Endothelial cell of umbilical vein (primary cell): ENCODE measurements at regions of chr11 and their contacts with region 1.

Region 1: DNA sequence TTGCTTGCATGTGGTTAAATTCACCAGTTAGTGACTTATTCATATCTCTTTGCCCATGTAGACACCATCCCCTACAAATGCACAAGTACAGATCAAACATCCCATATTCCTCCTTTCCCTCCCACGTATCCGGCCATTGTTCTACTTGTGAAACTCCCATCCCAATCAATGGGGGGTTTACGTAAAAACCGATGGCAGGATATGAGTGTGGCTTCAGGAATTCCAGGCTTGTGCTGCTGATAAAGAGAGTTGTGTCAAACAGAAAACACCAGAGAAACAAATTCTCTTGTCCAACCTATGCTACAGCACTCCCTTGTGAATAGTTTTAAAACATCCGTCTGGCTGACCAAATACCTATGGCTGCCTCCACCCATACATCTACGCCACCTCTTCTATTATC is 15.5 kb downstream of the FLI1 start:
- DNase-seq: peak; percentile 99
- H3K4me3 ChIP-seq: no peak overlapping the region
- H3K27ac ChIP-seq: peak overlapping the region; percentile 97
- H3K4me1 ChIP-seq: peaks cover 88% of the 10 kb centered on the region
- H3K27me3 ChIP-seq: no peaks in the 10 kb centered on the region
- CTCF ChIP-seq: peak in 1 of 2 donors; percentile 5
- POLR2A ChIP-seq: peak; percentile 85

Region 2: DNA sequence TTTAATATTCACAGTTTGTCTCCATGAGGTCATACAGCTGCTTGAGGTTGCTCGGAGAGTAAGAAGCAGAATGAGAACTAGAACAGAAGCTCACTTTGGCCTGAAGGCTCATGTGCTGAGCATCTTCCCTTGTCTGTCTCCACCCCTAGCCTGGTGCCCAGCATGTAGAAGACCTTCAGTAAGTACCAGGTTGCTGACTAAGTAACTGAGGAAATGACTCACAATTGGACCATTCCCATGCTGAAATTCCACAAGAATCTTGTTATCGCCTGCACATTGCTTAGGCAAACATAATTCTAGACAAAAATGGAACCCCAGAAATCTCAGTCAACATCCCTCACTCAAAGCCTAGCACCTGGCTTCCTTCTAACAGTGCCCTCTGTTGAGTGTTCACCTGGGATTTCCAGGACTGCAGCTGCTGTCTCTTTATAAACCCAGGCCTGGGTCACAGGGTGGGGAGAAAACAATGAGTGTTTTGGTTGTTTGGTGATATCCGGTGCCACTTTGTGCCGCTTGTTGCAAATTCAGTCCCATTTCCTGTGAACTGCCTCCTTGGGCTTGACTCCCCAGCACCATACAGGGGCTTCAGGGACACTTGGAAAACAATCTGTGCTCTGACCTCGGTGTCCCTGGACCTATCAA is 528.8 kb before region 1 on chr11:
- CTCF ChIA-PET with region 1: no interaction called
- POLR2A ChIA-PET with region 1: no interaction called
- dilution Hi-C with region 1: no loop called
- intact Hi-C with region 1: loop called (anchors 5 kb)
- DNase-seq: peak; percentile 93
- H3K4me3 ChIP-seq: no peak overlapping the region
- H3K27ac ChIP-seq: peak overlapping the region; percentile 97
- H3K4me1 ChIP-seq: peaks cover 19% of the 10 kb centered on the region
- H3K27me3 ChIP-seq: no peaks in the 10 kb centered on the region
- CTCF ChIP-seq: no peak
- POLR2A ChIP-seq: no peak

Region 3: GRCh38 chr11:128238521-128239265 is 470.7 kb before region 1 on chr11:
- CTCF ChIA-PET with region 1: no interaction called
- POLR2A ChIA-PET with region 1: no interaction called
- dilution Hi-C with region 1: no loop called
- intact Hi-C with region 1: no loop called
- DNase-seq: peak; percentile 33
- H3K4me3 ChIP-seq: no peak overlapping the region
- H3K27ac ChIP-seq: peak overlapping the region; percentile 60
- H3K4me1 ChIP-seq: peaks cover 34% of the 10 kb centered on the region
- H3K27me3 ChIP-seq: no peaks in the 10 kb centered on the region
- CTCF ChIP-seq: no peak
- POLR2A ChIP-seq: no peak

Region 4: GRCh38 chr11:128506999-128507611 is 202.3 kb before region 1 on chr11:
- CTCF ChIA-PET with region 1: no interaction called
- POLR2A ChIA-PET with region 1: no interaction called
- dilution Hi-C with region 1: no loop called
- intact Hi-C with region 1: loop called (anchors 5 kb)
- DNase-seq: peak; percentile 88
- H3K4me3 ChIP-seq: peak overlapping the region in 1 of 3 experiments; percentile 12
- H3K27ac ChIP-seq: peak overlapping the region; percentile 89
- H3K4me1 ChIP-seq: peaks cover 66% of the 10 kb centered on the region
- H3K27me3 ChIP-seq: no peaks in the 10 kb centered on the region
- CTCF ChIP-seq: no peak
- POLR2A ChIP-seq: peak; percentile 57

Region 5: GRCh38 chr11:128720522-128720985 is 11.2 kb after region 1 on chr11:
- CTCF ChIA-PET with region 1: interaction called, 44 read pairs
- POLR2A ChIA-PET with region 1: interaction called, 28 read pairs
- dilution Hi-C with region 1: no loop called
- intact Hi-C with region 1: loop called (anchors 1 kb)
- DNase-seq: peak; percentile 58
- H3K4me3 ChIP-seq: no peak overlapping the region
- H3K27ac ChIP-seq: peak overlapping the region; percentile 51
- H3K4me1 ChIP-seq: peaks cover 61% of the 10 kb centered on the region
- H3K27me3 ChIP-seq: no peaks in the 10 kb centered on the region
- CTCF ChIP-seq: no peak
- POLR2A ChIP-seq: no peak

Region 6: GRCh38 chr11:128757235-128757711 is 47.9 kb after region 1 on chr11:
- CTCF ChIA-PET with region 1: interaction called, 9 read pairs
- POLR2A ChIA-PET with region 1: no interaction called
- dilution Hi-C with region 1: no loop called
- intact Hi-C with region 1: loop called (anchors 1 kb)
- DNase-seq: peak; percentile 75
- H3K4me3 ChIP-seq: no peak overlapping the region
- H3K27ac ChIP-seq: peak overlapping the region; percentile 21
- H3K4me1 ChIP-seq: peaks cover 19% of the 10 kb centered on the region
- H3K27me3 ChIP-seq: no peaks in the 10 kb centered on the region
- CTCF ChIP-seq: peak; percentile 55 to 61
- POLR2A ChIP-seq: no peak